ENCODE measurements at regions of chr9 and their contacts with region 1.

Region 1: GRCh38 chr9:115058684-115059315 is 59.2 kb downstream of the TNC start:
- DNase-seq: peak in 1 of 2 experiments; percentile 63
- H3K4me3 ChIP-seq: no peak overlapping the region
- H3K27ac ChIP-seq: no peak overlapping the region
- H3K4me1 ChIP-seq: peaks cover 16% of the 10 kb centered on the region
- H3K27me3 ChIP-seq: no peaks in the 10 kb centered on the region
- CTCF ChIP-seq: no peak

Region 2: DNA sequence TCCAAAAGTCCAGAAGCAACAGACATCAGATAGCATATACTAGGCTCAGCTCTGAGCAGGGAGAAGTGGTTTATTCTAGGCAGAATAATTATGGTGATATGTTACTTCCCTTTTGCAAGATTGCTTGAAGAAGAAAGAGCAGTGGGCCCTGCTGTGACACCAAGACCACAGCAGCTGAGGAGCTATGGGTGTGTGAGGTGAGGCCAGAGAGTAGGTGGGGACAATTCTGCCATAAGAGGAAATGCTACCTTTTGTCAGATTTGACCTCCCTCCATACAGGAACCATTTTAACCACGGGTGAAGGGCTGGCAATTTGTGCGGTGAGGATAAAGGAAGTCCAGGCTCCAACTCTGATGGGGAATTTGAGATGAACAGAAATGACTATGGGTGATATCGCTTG is 304.2 kb before region 1 on chr9:
- CTCF ChIA-PET with region 1: interaction called, 14 read pairs
- POLR2A ChIA-PET with region 1: no interaction called
- intact Hi-C with region 1: no loop called
- DNase-seq: no peak
- H3K4me3 ChIP-seq: no peak overlapping the region
- H3K27ac ChIP-seq: no peak overlapping the region
- H3K4me1 ChIP-seq: no peaks in the 10 kb centered on the region
- H3K27me3 ChIP-seq: no peaks in the 10 kb centered on the region
- CTCF ChIP-seq: no peak

Measured in PC-9 (cell line).